Heart right ventricle (tissue), 16 donors: ENCODE measurements at regions of chr1 and their contacts with region 1.

Region 1: DNA sequence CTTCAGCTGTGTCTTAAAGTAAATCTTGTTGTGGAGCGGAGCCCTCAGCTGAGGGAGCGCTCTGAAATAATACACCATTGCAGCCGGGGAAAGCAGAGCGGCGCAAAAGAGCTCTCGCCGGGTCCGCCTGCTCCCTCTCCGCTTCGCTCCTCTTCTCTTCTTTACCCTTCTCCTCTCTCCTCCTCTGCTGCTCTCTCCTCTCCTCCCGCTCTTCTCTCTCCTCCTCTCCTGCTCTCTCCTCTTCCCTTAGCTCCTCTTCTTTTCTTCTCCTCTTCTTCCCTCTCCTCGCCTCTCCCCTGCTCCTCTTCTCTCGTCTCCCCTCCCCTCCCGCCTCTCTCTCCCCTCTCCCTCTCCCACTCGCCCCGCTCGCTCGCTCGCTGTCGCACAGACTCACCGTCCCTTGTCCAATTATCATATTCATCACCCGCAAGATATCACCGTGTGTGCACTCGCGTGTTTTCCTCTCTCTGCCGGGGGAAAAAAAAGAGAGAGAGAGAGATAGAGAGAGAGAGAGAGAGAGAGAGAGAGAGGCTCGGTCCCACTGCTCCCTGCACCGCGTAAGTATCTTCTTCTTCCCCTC is at the start of gene PROX1:
- DNase-seq: no peak
- ATAC-seq: peak; percentile 18 to 88 (median 82)
- H3K4me3 ChIP-seq: peak within 1 kb of the TSS; percentile 49 to 70 (median 66)
- H3K27ac ChIP-seq: peak within 1 kb of the TSS; percentile 42 to 93 (median 85)
- H3K4me1 ChIP-seq: peaks cover 0 to 47% (median 19%) of the 10 kb centered on the region in 9 donors
- H3K27me3 ChIP-seq: peaks cover 5 to 94% (median 44%) of the 10 kb centered on the region in 7 donors
- CTCF ChIP-seq: no peak
- total RNA-seq, gene PROX1: 52.6 to 132 (median 116) TPM

Region 2: GRCh38 chr1:213564215-213564659 is 423.8 kb before region 1 on chr1:
- intact Hi-C with region 1: loop called in 1 of 10 experiments (anchors 10 kb)
- DNase-seq: no peak
- ATAC-seq: no peak
- H3K4me3 ChIP-seq: no peak overlapping the region
- H3K27ac ChIP-seq: no peak overlapping the region
- H3K4me1 ChIP-seq: no peaks in the 10 kb centered on the region
- H3K27me3 ChIP-seq: no peaks in the 10 kb centered on the region
- CTCF ChIP-seq: peak; percentile 11 to 49 (median 38)

Region 3: DNA sequence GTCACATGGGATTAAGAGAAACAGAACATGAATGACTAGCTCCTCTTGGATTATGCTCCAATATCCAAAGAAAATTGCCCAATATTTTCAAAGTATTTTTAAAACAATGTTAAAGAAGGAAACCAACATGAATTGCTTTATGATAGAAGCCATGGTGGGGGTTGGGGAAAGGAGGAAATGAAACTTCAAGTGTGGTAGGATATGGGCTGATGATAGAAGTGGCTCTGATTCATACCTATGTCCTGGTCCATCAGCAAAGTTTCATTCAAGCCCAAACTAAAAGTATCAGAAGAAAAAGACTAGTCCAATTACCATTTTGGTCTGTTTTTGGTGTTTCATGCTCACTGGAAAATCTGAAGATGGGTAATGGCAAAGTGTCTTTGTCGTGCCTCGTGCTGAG is 104.4 kb before region 1 on chr1:
- intact Hi-C with region 1: no loop called
- DNase-seq: no peak
- ATAC-seq: no peak
- H3K4me3 ChIP-seq: no peak overlapping the region
- H3K27ac ChIP-seq: no peak overlapping the region
- H3K4me1 ChIP-seq: no peaks in the 10 kb centered on the region
- H3K27me3 ChIP-seq: peaks cover 0 to 7% (median 0%) of the 10 kb centered on the region in 7 donors
- CTCF ChIP-seq: no peak

Region 4: GRCh38 chr1:214029796-214030195 is 41.8 kb after region 1 on chr1:
- intact Hi-C with region 1: loop called in 2 of 10 experiments (anchors 5 kb)
- DNase-seq: peak in 1 of 2 donors; percentile 42
- ATAC-seq: peak; percentile 74 to 90 (median 84)
- H3K4me3 ChIP-seq: no peak overlapping the region
- H3K27ac ChIP-seq: peak overlapping the region; percentile 74 to 97 (median 90)
- H3K4me1 ChIP-seq: peaks cover 0 to 48% (median 18%) of the 10 kb centered on the region in 9 donors
- H3K27me3 ChIP-seq: no peaks in the 10 kb centered on the region
- CTCF ChIP-seq: no peak

Region 5: DNA sequence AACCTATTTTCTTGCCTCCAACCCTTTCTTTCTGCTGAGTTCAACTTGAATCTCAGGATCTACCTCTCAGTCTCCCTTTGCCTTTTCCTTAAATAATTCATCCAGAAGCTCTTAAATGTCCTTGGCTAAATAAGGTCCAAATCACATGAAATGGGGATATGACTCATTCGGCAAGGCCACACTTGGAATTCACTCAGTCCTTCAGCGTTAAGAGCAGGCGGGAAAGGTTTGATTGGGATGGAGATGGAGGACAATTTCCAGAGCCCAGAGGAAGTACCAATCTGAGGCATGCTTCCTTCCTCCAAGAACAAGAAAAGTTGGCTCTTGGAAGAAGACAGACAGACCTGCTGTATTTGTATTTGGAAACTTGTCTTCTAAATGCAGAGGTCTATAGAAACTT is 128.2 kb after region 1 on chr1:
- intact Hi-C with region 1: loop called in 9 of 10 experiments (anchors 5 to 10 kb)
- DNase-seq: no peak
- ATAC-seq: no peak
- H3K4me3 ChIP-seq: no peak overlapping the region
- H3K27ac ChIP-seq: no peak overlapping the region
- H3K4me1 ChIP-seq: peaks cover 0 to 6% (median 0%) of the 10 kb centered on the region in 9 donors
- H3K27me3 ChIP-seq: no peaks in the 10 kb centered on the region
- CTCF ChIP-seq: no peak